H1 (cell line): ENCODE measurements at regions of chr4 and their contacts with region 1.

Region 1: DNA sequence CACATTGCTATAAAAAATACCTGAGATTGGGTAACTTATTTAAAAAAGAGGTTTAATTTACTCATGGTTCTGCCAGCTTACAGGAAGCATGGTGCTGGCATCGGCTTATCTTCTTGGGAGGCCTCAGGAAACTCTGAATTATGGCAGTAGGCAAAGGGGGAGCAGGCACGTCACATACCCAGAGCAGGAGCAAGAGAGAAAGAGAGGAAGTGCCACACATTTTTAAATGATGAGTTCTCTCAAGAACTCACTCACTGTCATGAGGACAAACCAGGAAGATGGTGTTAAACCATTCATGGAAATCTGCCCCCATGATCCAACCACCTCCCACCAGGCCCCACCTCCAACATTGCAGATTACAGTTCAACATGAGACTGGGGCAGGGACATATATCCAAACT is 10.0 kb upstream of the AFF1 start:
- DNase-seq: no peak
- H3K4me3 ChIP-seq: no peak overlapping the region
- H3K27ac ChIP-seq: no peak overlapping the region
- H3K4me1 ChIP-seq: no peaks in the 10 kb centered on the region
- H3K27me3 ChIP-seq: no peaks in the 10 kb centered on the region
- CTCF ChIP-seq: no peak
- EP300 ChIP-seq: no peak
- POLR2A ChIP-seq: no peak
- RAD21 ChIP-seq: no peak

Region 2: DNA sequence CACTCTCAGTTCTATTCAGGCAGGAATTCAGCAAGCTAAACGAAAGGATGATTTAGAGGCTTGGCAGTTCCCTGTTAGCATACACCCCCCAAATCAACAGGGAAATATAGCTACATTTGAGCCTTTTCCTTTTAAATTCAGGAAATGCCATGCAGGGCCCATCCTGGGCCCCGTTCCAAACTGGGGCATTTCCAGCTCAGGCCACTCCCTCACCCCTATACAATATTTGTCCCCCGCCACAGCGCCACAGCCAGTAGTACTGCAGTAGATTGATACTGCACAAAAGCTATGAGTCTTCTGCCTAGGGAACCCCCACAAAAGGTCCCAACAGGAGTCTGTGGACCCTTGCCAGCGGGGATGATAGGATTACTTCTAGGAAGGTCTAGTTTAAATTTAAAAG is 463.0 kb before region 1 on chr4:
- CTCF ChIA-PET with region 1: no interaction called
- POLR2A ChIA-PET with region 1: no interaction called
- DNase-seq: no peak
- H3K4me3 ChIP-seq: no peak overlapping the region
- H3K27ac ChIP-seq: no peak overlapping the region
- H3K4me1 ChIP-seq: peaks cover 0 to 3% (median 1%) of the 10 kb centered on the region in 4 experiments; a peak in 2 of 7 replicates
- H3K27me3 ChIP-seq: no peaks in the 10 kb centered on the region
- CTCF ChIP-seq: no peak
- EP300 ChIP-seq: no peak
- POLR2A ChIP-seq: no peak
- RAD21 ChIP-seq: no peak

Region 3: DNA sequence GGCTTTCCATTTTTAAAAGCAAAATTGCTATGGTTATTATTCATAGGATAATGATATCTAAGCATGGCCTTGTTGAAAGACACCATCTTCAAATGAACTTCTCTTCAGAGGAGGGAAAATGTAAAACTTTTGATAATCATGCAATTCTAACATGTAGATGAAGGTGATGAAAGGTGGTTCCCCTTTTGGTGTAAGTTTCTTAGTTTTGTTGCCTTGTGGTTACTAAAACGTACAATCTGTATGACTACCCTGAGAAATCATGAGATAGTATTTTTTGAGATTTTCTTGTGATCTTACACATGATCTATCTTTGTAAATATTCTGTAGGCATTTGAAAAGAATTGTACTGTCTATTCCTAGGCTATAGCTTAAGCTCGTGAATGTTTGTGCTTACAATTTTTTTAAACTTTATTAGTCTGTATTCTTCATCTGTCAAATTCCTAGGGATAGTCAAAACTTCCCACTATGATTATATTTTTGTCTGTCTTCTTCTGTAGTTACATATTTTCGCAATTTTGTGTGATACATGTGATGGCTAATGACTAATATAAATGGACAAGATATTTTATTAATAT is 283.2 kb before region 1 on chr4:
- CTCF ChIA-PET with region 1: no interaction called
- POLR2A ChIA-PET with region 1: no interaction called
- DNase-seq: no peak
- H3K4me3 ChIP-seq: no peak overlapping the region
- H3K27ac ChIP-seq: no peak overlapping the region
- H3K4me1 ChIP-seq: no peaks in the 10 kb centered on the region
- H3K27me3 ChIP-seq: no peaks in the 10 kb centered on the region
- CTCF ChIP-seq: no peak
- EP300 ChIP-seq: no peak
- POLR2A ChIP-seq: no peak
- RAD21 ChIP-seq: no peak

Region 4: GRCh38 chr4:86910820-86911684 is 13.8 kb before region 1 on chr4:
- CTCF ChIA-PET with region 1: interaction called, 19 read pairs
- POLR2A ChIA-PET with region 1: interaction called, 4 read pairs
- DNase-seq: no peak
- H3K4me3 ChIP-seq: no peak overlapping the region
- H3K27ac ChIP-seq: no peak overlapping the region
- H3K4me1 ChIP-seq: no peaks in the 10 kb centered on the region
- H3K27me3 ChIP-seq: no peaks in the 10 kb centered on the region
- CTCF ChIP-seq: no peak
- EP300 ChIP-seq: no peak
- POLR2A ChIP-seq: no peak
- RAD21 ChIP-seq: no peak

Region 5: GRCh38 chr4:86934771-86935565 is 10.2 kb after region 1 on chr4 and contains the start of gene AFF1:
- CTCF ChIA-PET with region 1: interaction called, 13 read pairs
- POLR2A ChIA-PET with region 1: interaction called, 7 read pairs
- DNase-seq: peak; percentile 81 to 90
- H3K4me3 ChIP-seq: peak within 1 kb of the TSS; percentile 67 to 88 (median 80)
- H3K27ac ChIP-seq: peak within 1 kb of the TSS; percentile 81
- H3K4me1 ChIP-seq: peaks cover 0 to 5% (median 3%) of the 10 kb centered on the region in 4 experiments; a peak in 3 of 7 replicates
- H3K27me3 ChIP-seq: no peaks in the 10 kb centered on the region
- CTCF ChIP-seq: peak; percentile 33 to 39 (median 34)
- EP300 ChIP-seq: no peak; a peak in 1 of 3 replicates
- POLR2A ChIP-seq: peak; percentile 85 to 92
- RAD21 ChIP-seq: peak; percentile 12 to 41; a peak in 3 of 4 replicates
- total RNA-seq, gene AFF1: 85.4 and 85.5 TPM in 2 replicates

Region 6: GRCh38 chr4:86972997-86973396 is 48.2 kb after region 1 on chr4:
- CTCF ChIA-PET with region 1: interaction called, 10 read pairs
- POLR2A ChIA-PET with region 1: no interaction called
- DNase-seq: no peak
- H3K4me3 ChIP-seq: no peak overlapping the region
- H3K27ac ChIP-seq: no peak overlapping the region
- H3K4me1 ChIP-seq: peaks cover 6 to 17% (median 12%) of the 10 kb centered on the region in 4 experiments
- H3K27me3 ChIP-seq: no peaks in the 10 kb centered on the region
- CTCF ChIP-seq: no peak
- EP300 ChIP-seq: no peak
- POLR2A ChIP-seq: no peak
- RAD21 ChIP-seq: no peak

Region 7: DNA sequence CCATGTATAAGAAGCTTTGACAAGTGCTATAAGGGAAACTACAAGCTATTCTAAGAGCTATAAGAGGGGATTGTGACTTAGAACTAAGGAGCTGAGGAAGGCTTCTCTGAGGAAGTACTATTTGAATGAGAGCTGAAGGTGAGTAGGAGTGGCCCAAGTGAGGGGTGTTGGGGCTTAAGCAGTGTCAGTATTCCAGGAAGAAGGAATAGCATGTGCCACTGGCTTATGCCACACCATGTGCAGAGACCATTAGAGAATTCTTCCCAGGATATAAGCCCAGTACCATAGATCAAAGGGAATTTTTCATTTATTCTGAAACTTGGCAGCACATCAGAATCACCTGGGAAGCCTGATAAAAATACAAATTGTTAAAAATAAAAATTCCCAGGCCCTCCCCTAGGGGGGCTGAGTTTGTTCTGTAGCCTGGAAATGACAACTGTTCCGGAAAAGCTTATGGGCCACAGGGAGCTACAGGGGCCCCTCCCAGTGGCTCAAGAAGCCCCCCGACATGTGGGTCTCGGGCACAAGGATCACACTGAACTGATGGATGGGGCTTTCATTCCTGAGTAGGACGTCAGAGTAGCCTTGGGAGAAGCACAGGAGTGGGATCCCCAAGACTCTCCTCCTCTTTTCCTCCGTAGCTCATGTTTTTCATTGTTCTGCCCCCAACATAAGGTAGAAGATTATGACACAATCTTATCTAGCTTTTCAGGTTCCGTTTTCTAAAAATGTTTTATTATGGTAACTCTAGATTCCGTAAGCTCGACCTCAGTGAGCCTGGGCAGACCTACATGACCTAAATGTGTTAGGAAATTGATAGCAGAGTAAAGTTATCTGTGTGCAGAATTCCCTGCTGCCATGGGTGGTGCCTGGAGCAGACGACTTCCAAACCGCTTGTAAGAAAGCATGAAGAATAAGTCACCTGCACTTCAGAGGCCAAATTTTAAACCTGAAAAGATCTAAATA is 129.3 kb after region 1 on chr4:
- CTCF ChIA-PET with region 1: interaction called, 10 read pairs
- POLR2A ChIA-PET with region 1: interaction called, 4 read pairs
- DNase-seq: no peak
- H3K4me3 ChIP-seq: no peak overlapping the region
- H3K27ac ChIP-seq: no peak overlapping the region
- H3K4me1 ChIP-seq: peaks cover 0 to 19% (median 10%) of the 10 kb centered on the region in 4 experiments; a peak in 3 of 7 replicates
- H3K27me3 ChIP-seq: no peaks in the 10 kb centered on the region
- CTCF ChIP-seq: no peak
- EP300 ChIP-seq: no peak
- POLR2A ChIP-seq: no peak
- RAD21 ChIP-seq: no peak

Region 8: GRCh38 chr4:87093443-87094123 is 168.8 kb after region 1 on chr4:
- CTCF ChIA-PET with region 1: interaction called, 72 read pairs
- POLR2A ChIA-PET with region 1: interaction called, 5 read pairs
- DNase-seq: no peak
- H3K4me3 ChIP-seq: no peak overlapping the region
- H3K27ac ChIP-seq: no peak overlapping the region
- H3K4me1 ChIP-seq: peaks cover 0 to 9% (median under 1%) of the 10 kb centered on the region in 4 experiments; a peak in 3 of 7 replicates
- H3K27me3 ChIP-seq: no peaks in the 10 kb centered on the region
- CTCF ChIP-seq: peak in 2 of 3 experiments; percentile 56 to 68; a peak in 3 of 4 replicates
- EP300 ChIP-seq: no peak
- POLR2A ChIP-seq: no peak
- RAD21 ChIP-seq: peak; percentile 73 to 79

Region 9: DNA sequence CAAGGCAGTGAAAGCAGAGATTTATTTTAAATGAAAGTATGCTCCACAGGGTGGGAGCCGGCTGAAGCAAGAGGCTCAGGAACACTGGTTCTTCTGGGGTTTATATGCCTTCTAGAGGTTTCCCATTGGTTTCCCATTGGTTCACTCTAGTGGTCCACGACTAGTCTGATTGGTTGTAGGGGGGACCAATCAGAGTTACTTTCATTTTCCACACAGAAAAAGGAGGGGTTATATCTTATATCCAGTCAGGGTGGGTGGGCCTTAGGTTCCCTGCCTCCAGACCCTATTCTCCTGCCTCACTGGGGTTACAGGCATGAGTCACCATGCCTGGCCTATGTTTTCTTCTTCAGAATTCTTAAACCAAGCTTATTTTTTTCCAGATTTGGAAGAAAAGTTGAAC is 194.0 kb after region 1 on chr4:
- CTCF ChIA-PET with region 1: interaction called, 17 read pairs
- POLR2A ChIA-PET with region 1: no interaction called
- DNase-seq: no peak
- H3K4me3 ChIP-seq: no peak overlapping the region
- H3K27ac ChIP-seq: no peak overlapping the region
- H3K4me1 ChIP-seq: peaks cover 0 to 5% (median 2%) of the 10 kb centered on the region in 4 experiments; a peak in 4 of 7 replicates
- H3K27me3 ChIP-seq: no peaks in the 10 kb centered on the region
- CTCF ChIP-seq: no peak
- EP300 ChIP-seq: no peak
- POLR2A ChIP-seq: peak in 1 of 2 experiments; percentile 32; a peak in 1 of 3 replicates
- RAD21 ChIP-seq: no peak